Gastrocnemius medialis (tissue), 4 donors: ENCODE measurements at regions of chr2 and their contacts with region 1.

Region 1: GRCh38 chr2:178568227-178568626 is 88.0 kb downstream of the PLEKHA3 start:
- DNase-seq: no peak
- ATAC-seq: no peak
- H3K4me3 ChIP-seq: no peak overlapping the region
- H3K27ac ChIP-seq: peak overlapping the region in 3 of 4 donors; percentile 24 to 52 (median 46)
- H3K4me1 ChIP-seq: peaks cover 69 to 90% of the 10 kb centered on the region in 2 donors
- H3K27me3 ChIP-seq: no peaks in the 10 kb centered on the region
- CTCF ChIP-seq: no peak
- POLR2A ChIP-seq: no peak

Region 2: DNA sequence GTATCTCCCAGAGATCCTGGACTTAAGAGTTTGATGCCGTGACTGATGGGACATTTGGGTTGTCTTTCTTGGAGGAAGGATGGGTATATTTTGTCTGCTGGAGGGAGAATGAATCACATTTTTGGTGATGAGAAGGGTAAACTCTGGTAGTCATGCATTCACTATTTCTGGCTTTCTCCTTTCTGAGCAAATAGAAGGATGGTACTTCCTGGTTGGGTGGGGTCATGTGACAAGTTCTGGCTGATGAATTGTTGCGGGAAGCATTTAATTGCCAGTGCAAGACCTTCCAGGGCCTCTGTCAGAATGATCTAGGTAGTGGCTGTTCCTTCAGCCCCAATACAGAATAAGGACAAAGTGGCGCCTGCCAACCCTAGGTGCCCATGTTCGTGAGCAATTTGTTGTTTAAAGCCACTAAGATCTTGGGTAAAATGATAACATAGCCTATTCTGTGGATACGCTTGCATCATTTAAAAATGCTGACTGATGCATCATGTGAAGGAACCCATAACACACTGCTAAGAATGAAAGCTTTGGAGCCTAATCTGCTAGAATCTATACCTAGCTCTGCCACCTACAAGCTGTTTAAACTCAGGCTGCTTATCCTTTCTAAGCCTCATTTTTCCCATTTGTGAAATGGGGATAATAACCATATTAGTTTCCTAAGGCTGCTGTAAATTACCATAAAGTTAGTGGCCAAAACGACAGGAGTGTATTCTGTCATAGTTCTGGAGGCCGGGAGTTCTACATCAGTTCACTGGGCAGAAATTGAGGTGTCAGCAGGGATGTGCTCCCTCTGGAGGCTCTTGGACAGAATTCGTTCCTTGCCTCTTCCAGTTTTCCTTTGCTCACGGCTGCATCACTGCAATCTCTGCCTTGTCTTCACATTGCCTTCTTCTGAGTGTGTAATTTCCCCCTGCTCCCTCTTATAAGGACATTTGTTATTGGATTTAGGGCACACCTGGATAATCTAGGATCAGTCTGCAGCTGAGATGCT is 894.3 kb before region 1 on chr2:
- in situ Hi-C with region 1: no loop called
- intact Hi-C with region 1: no loop called
- DNase-seq: no peak
- ATAC-seq: no peak
- H3K4me3 ChIP-seq: no peak overlapping the region
- H3K27ac ChIP-seq: no peak overlapping the region
- H3K4me1 ChIP-seq: peaks cover 0 to 22% of the 10 kb centered on the region in 2 donors
- H3K27me3 ChIP-seq: no peaks in the 10 kb centered on the region
- CTCF ChIP-seq: no peak
- POLR2A ChIP-seq: no peak

Region 3: DNA sequence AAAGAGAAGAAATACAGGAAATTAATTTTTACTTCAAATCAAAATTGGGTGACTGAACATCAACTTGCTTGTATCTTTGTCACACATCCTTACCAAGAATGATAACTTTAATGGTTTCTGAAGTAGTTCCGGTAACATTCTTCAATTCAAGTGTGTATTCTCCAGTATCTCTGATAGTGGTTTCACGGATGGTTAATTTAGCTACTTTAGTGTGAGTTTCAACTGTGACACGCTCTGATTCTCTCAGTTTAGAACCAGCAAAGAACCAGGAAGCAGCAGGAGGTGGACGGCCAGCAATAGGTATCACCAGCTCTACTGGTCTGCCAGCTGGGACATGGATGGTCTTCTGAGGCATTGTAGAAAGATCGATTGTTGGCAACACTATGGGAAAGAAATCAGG is 25.7 kb before region 1 on chr2:
- in situ Hi-C with region 1: no loop called
- intact Hi-C with region 1: no loop called
- DNase-seq: no peak
- ATAC-seq: no peak
- H3K4me3 ChIP-seq: no peak overlapping the region
- H3K27ac ChIP-seq: peak overlapping the region in 3 of 4 donors; percentile 4 to 20 (median 20)
- H3K4me1 ChIP-seq: peaks cover 0 to 5% of the 10 kb centered on the region in 2 donors
- H3K27me3 ChIP-seq: no peaks in the 10 kb centered on the region
- CTCF ChIP-seq: no peak
- POLR2A ChIP-seq: no peak

Region 4: GRCh38 chr2:178553047-178553446 is 15.2 kb before region 1 on chr2:
- in situ Hi-C with region 1: no loop called
- intact Hi-C with region 1: loop called (anchors 2 kb)
- DNase-seq: no peak
- ATAC-seq: peak; percentile 68 to 80
- H3K4me3 ChIP-seq: no peak overlapping the region
- H3K27ac ChIP-seq: peak overlapping the region; percentile 71 to 85 (median 76)
- H3K4me1 ChIP-seq: peaks cover 39 to 45% of the 10 kb centered on the region in 2 donors
- H3K27me3 ChIP-seq: no peaks in the 10 kb centered on the region
- CTCF ChIP-seq: no peak
- POLR2A ChIP-seq: no peak

Region 5: DNA sequence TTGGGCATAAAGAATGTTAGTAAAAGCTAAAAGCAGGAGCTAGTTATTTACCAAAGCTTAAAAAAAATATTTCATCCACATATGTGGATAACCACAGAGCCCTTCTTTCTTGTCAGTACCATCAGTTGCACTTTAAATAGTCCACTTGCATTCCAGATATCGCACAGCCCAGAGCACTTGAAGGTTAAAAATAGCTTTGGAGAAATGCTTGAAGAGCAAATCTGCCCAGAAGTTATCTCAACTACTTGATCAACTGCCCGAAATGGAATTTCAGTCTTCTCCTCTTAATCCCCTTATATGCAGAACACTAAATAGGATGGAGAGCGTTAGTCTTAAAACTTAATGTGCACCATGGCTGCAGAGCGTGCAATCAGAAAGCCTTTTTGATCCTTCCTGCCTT is 60.4 kb after region 1 on chr2:
- in situ Hi-C with region 1: no loop called
- intact Hi-C with region 1: no loop called
- DNase-seq: no peak
- ATAC-seq: peak in 1 of 2 donors; percentile 43
- H3K4me3 ChIP-seq: no peak overlapping the region
- H3K27ac ChIP-seq: peak overlapping the region in 3 of 4 donors; percentile 27 to 60 (median 55)
- H3K4me1 ChIP-seq: peaks cover 48 to 63% of the 10 kb centered on the region in 2 donors
- H3K27me3 ChIP-seq: no peaks in the 10 kb centered on the region
- CTCF ChIP-seq: no peak
- POLR2A ChIP-seq: no peak